ENCODE measurements at regions of chr5 and their contacts with region 1.

Region 1: DNA sequence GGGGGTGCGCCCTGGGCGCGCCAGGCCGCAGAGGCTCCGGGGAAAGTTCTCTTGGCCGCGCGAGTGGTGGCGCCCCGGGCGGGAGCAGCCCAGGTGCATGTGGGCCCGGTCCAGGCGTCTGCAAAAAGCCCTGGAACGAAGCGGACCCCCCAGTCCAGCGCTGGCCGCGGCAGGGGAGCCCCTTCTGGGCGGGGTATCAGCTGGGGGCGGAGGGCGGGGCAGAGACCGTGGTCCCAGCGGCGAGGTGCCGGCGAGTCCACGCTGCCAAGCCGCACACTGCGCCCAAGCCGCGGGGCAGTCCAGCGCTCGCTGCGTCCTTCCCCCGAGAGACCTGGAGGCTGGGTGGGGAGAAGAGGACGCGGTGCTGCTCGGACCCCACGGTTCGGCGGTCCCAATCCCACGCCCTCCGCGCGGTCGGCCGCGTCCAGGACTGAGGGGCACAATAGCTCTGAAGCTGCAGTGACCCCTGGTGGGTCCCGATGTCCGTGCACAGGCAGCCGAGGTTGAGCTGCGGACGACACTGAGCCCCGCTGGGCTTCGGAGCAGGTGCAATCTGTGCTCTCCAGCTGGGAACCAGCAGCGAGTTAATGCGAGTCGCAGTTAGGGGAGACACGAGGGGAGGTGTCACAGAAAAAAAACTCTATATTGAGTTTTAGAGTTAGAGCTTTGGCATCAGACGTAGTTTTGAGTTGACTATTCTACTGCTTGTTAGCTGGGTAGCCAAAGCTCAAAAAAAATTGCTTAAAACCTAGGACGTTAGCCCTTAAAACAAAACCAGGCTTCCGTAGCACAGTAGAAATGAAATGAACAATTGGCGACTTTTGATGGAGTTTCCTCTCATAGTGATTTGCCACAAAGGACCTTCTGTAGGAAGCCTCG is 1.1 kb upstream of the EPB41L4A start:
- DNase-seq: peak; percentile 87
- H3K4me3 ChIP-seq: peak overlapping the region; percentile 77 to 88 (median 84)
- H3K27ac ChIP-seq: peak overlapping the region; percentile 83 to 86 (median 85)
- H3K4me1 ChIP-seq: peaks cover 0 to 9% (median 1%) of the 10 kb centered on the region in 4 donors
- H3K27me3 ChIP-seq: peaks cover 9% of the 10 kb centered on the region
- CTCF ChIP-seq: peak; percentile 72 to 93 (median 79)
- EP300 ChIP-seq: no peak
- POLR2A ChIP-seq: no peak

Region 2: GRCh38 chr5:111670826-111671492 is 749.3 kb before region 1 on chr5:
- in situ Hi-C with region 1: no loop called
- intact Hi-C with region 1: no loop called
- DNase-seq: no peak
- H3K4me3 ChIP-seq: no peak overlapping the region
- H3K27ac ChIP-seq: no peak overlapping the region
- H3K4me1 ChIP-seq: no peaks in the 10 kb centered on the region
- H3K27me3 ChIP-seq: no peaks in the 10 kb centered on the region
- CTCF ChIP-seq: no peak
- EP300 ChIP-seq: no peak
- POLR2A ChIP-seq: no peak

Region 3: DNA sequence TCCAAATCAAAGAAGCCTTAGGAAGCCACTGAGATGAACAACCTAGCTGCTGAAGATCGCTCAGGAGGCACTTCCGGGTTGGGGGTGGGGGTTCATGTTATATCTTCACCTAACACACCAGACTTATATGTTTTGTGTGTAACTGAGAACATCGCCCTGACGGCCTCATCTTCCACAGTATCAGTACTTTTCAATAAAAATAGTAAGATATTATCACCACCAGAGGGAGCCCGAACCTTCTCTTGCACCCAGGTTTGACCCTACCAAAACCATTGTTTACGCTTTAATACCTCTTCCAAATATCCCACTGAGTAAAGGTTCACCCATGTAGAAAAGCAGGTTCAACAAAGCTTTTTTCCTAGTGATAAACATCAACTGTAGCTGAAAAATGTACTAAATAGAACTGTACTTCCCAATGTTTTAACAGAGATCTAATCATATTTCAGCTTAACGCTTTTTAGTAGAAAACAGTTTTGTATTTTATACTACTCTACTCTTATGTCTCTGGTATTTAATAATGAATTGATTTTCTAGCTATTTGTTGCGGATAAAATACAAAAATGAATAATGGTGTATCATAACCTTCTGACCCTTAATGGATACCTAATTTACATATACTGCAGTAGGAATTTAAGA is 245.1 kb before region 1 on chr5:
- in situ Hi-C with region 1: loop called in 1 of 4 experiments (anchors 10 kb)
- intact Hi-C with region 1: loop called (anchors 10 kb)
- DNase-seq: no peak
- H3K4me3 ChIP-seq: no peak overlapping the region
- H3K27ac ChIP-seq: no peak overlapping the region
- H3K4me1 ChIP-seq: peaks cover 0 to 4% (median 1%) of the 10 kb centered on the region in 4 donors
- H3K27me3 ChIP-seq: no peaks in the 10 kb centered on the region
- CTCF ChIP-seq: peak; percentile 52 to 66 (median 58)
- EP300 ChIP-seq: no peak
- POLR2A ChIP-seq: no peak

Region 4: DNA sequence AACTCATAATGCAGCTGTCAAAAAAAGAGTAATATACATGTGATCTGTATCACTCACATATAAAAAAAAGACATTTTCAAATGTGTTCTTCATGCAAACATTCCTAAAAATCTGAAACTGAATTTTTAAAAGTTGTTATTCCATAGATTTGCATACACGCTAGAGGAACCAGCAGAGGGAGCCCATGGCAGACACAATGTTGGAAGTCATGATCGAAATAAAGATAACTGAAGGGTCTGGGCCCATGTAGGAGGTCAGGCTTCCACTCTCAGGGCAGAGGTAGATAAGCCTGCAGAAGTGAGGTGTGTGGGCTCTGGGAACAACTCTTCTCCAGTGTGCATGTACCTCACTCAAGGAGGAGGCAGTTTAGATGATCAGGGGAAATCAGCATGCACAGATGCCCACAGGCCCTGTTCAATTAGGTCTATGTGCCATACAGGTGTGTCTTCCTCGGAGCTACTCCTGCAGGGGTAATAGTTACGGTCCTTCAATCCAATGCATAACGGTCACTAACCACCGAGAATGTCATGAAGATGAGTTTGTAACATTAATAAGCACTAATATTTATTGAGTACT is 209.7 kb before region 1 on chr5:
- in situ Hi-C with region 1: loop called in 3 of 4 experiments (anchors 10 to 25 kb)
- intact Hi-C with region 1: no loop called
- DNase-seq: peak; percentile 39
- H3K4me3 ChIP-seq: no peak overlapping the region
- H3K27ac ChIP-seq: no peak overlapping the region
- H3K4me1 ChIP-seq: no peaks in the 10 kb centered on the region
- H3K27me3 ChIP-seq: no peaks in the 10 kb centered on the region
- CTCF ChIP-seq: peak; percentile 51 to 68 (median 60)
- EP300 ChIP-seq: no peak
- POLR2A ChIP-seq: no peak

Region 5: DNA sequence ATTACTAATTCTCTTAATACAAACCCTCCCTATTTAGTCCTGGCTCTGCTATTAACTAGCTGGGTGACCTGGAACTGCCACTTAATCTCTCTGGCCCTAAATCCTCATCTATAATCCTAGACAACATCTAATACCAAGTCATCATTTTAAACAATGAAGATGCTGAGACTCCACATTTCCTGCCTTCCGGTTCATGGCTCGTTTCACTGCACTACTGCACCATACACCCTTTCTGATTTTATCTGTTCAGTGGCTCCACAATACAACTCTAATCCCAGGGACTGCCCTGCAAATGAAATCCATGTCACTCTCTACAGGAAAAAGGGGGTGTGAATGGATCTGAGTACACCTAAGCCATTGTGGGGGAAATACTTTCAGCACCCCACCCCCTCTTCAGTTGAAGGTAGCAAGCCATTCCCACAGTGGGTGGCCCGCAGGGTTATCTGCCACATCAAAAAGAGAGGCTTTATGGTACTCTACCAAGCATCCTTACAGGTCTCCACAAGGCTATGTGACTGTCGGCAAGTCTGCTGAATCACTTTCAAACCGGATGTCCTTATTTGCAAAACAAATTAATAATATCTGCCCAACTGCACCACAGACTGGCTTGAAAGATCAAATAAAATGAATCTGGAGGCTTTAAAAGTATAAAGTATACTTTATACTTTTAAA is 90.7 kb before region 1 on chr5:
- in situ Hi-C with region 1: no loop called
- intact Hi-C with region 1: loop called (anchors 5 kb)
- DNase-seq: no peak
- H3K4me3 ChIP-seq: no peak overlapping the region
- H3K27ac ChIP-seq: no peak overlapping the region
- H3K4me1 ChIP-seq: no peaks in the 10 kb centered on the region
- H3K27me3 ChIP-seq: no peaks in the 10 kb centered on the region
- CTCF ChIP-seq: no peak
- EP300 ChIP-seq: no peak
- POLR2A ChIP-seq: no peak

Region 6: DNA sequence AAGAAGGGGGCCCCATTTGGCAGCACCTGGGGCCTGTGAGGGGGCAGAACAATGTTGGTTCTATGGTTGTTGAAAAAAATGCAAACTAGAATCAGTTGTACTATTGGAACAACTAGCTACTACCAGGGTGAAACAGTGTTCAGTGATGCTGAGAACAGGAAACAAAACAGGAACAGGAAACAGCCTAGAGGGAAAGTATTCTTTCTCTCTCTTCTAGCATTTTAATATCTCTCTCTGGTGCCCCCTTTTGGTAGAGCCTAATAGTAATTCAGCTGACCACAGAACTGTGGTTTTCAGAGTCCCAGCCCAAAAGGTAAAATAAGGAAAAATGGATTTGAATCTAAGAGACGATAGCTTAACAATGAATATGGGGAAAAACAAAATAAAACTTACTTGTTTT is 1803.6 kb after region 1 on chr5:
- in situ Hi-C with region 1: no loop called
- intact Hi-C with region 1: no loop called
- DNase-seq: no peak
- H3K4me3 ChIP-seq: no peak overlapping the region
- H3K27ac ChIP-seq: no peak overlapping the region
- H3K4me1 ChIP-seq: no peaks in the 10 kb centered on the region
- H3K27me3 ChIP-seq: no peaks in the 10 kb centered on the region
- CTCF ChIP-seq: peak in 1 of 5 experiments; percentile 20
- EP300 ChIP-seq: no peak
- POLR2A ChIP-seq: no peak